Heart left ventricle (tissue), 16 donors: ENCODE measurements at regions of chr4 and their contacts with region 1.

Region 1: GRCh38 chr4:80335554-80336358 is at the start of gene CFAP299:
- DNase-seq: peak; percentile 72 to 88 (median 82)
- ATAC-seq: peak; percentile 88 to 98 (median 96)
- H3K4me3 ChIP-seq: peak within 1 kb of the TSS; percentile 27 to 73 (median 56)
- H3K27ac ChIP-seq: peak within 1 kb of the TSS in 1 of 12 donors; percentile 66
- H3K4me1 ChIP-seq: peaks cover 0 to 12% (median 5%) of the 10 kb centered on the region in 12 donors
- H3K27me3 ChIP-seq: peaks cover 0 to 46% (median 10%) of the 10 kb centered on the region in 9 donors
- CTCF ChIP-seq: peak in 10 of 12 donors; percentile 17 to 63 (median 38)
- POLR2A ChIP-seq: no peak
- total RNA-seq, gene CFAP299: 0.25 TPM in 1 of 9 donors, not detected in the others

Region 2: DNA sequence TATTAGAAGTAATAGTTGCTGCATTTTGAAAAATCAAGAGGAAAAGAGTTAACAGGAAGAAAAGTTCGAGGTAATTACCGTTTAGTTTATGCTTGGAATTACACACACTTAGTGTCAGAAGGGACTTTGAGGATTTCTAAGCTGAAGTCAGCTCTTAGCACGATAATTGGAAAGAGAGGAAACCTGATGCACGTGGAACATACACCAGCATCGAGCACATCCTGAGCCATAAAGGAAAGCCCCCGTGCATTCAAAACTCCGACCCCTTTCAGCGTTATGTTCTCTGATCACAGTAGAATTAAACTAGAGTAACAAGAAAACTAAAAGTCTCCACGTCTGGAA is 1396.1 kb before region 1 on chr4:
- intact Hi-C with region 1: loop called in 1 of 10 experiments (anchors 10 kb)
- DNase-seq: no peak
- ATAC-seq: no peak
- H3K4me3 ChIP-seq: peak overlapping the region; percentile 73 to 99 (median 88)
- H3K27ac ChIP-seq: peak overlapping the region in 4 of 12 donors; percentile 49 to 82 (median 68)
- H3K4me1 ChIP-seq: peaks cover 0 to 21% (median 13%) of the 10 kb centered on the region in 12 donors
- H3K27me3 ChIP-seq: no peaks in the 10 kb centered on the region
- CTCF ChIP-seq: no peak
- POLR2A ChIP-seq: no peak

Region 3: DNA sequence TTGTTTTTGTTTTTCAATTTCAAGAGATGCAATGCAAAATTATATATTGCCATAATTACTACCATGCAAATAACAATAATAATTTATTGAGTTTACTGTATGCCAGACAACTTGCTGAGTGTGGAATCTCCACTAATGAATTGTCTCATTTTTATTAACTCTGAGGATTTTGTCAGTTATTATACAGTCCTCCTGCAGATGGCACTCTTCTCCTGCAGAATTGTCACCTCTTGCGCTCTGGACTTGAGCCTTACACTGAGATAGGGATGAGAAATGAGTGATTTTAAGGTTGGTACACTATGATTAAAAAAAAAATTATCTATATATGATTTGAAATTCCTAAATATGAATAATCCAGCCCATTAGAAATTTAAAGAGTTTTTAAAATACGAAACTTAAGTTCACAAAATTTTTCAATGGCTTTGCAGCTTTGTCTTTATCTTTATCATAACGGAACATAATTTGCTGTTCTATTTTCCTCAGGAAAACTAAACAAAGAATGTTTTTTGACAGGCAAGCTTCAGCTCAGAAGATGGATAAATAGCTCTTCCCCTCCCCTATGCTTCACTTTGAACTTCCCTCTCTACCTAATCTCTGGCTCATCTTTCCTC is 1383.8 kb before region 1 on chr4:
- intact Hi-C with region 1: loop called in 4 of 10 experiments (anchors 5 to 10 kb)
- DNase-seq: peak in 1 of 5 donors; percentile 18
- ATAC-seq: peak; percentile 52 to 75 (median 68)
- H3K4me3 ChIP-seq: no peak overlapping the region
- H3K27ac ChIP-seq: no peak overlapping the region
- H3K4me1 ChIP-seq: no peaks in the 10 kb centered on the region
- H3K27me3 ChIP-seq: no peaks in the 10 kb centered on the region
- CTCF ChIP-seq: peak; percentile 54 to 85 (median 70)
- POLR2A ChIP-seq: no peak

Region 4: DNA sequence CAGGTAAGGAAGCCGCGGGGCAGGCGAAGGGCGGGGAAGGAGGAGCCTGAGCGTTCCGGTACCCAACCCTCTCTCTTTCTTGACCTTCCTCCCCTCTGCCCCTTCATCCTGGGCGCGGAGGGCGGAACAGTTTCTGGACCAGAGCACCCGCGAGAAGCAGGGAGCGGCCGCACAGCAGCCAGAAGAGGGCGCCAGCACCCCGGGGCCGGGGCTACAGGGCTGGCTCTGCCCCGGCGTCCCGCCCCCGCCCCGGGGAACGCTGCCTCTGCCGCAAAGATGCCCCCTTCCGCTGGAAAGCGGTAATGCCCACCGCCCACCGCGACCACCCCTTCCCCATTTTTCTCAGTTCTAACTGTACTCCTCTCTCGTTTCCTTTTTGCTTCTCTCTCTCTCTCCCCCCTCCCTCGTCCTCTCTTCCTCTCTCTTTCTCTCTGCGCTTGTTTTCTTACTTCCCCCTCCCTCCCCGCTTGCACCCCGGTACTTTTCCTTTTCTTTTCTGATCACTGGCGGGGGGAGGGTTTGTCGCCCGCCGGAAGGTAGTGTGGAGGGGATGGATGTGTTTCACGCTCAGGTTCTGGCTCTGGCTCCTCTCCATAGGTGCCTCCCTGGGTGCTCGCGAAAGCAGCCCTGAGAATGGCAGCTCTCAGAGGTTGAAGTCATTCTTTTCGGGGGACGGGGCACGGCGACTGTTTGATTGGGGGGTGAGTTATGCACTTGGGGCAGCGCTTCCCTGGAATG is 151.5 kb before region 1 on chr4:
- intact Hi-C with region 1: loop called in 1 of 10 experiments (anchors 5 kb)
- DNase-seq: peak; percentile 85 to 95 (median 88)
- ATAC-seq: peak; percentile 82 to 98 (median 96)
- H3K4me3 ChIP-seq: peak overlapping the region; percentile 38 to 80 (median 63)
- H3K27ac ChIP-seq: peak overlapping the region in 10 of 12 donors; percentile 23 to 83 (median 66)
- H3K4me1 ChIP-seq: peaks cover 0 to 45% (median 21%) of the 10 kb centered on the region in 12 donors
- H3K27me3 ChIP-seq: peaks cover 14 to 55% (median 42%) of the 10 kb centered on the region in 9 donors
- CTCF ChIP-seq: peak; percentile 71 to 98 (median 90)
- POLR2A ChIP-seq: no peak

Region 5: DNA sequence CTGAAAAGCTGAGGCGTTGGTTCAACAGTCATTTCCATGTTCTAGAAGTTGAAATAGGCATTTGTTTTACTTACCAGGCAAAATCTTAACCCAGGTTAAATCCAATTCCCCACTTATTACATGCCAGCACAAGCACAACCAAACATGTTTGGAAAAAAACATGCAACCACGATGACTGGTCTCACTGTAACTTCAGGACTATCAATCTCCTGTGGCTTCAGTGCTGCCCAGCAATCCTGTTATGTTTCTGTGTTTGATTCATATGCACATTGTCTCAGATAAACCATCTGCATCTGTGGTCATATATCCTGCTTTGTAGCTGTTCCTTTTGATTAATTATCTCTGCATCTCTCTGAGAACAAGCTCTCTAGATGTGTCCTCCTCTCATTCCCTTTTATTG is 110.2 kb before region 1 on chr4:
- intact Hi-C with region 1: no loop called
- DNase-seq: no peak
- ATAC-seq: no peak
- H3K4me3 ChIP-seq: no peak overlapping the region
- H3K27ac ChIP-seq: no peak overlapping the region
- H3K4me1 ChIP-seq: no peaks in the 10 kb centered on the region
- H3K27me3 ChIP-seq: peaks cover 0 to 61% (median 6%) of the 10 kb centered on the region in 9 donors
- CTCF ChIP-seq: no peak
- POLR2A ChIP-seq: no peak

Region 6: GRCh38 chr4:80237992-80238391 is 97.8 kb before region 1 on chr4:
- intact Hi-C with region 1: no loop called
- DNase-seq: no peak
- ATAC-seq: no peak
- H3K4me3 ChIP-seq: no peak overlapping the region
- H3K27ac ChIP-seq: no peak overlapping the region
- H3K4me1 ChIP-seq: no peaks in the 10 kb centered on the region
- H3K27me3 ChIP-seq: peaks cover 0 to 30% (median 3%) of the 10 kb centered on the region in 9 donors
- CTCF ChIP-seq: no peak
- POLR2A ChIP-seq: no peak